ENCODE measurements at regions of chr10 and their contacts with region 1.

Region 1: DNA sequence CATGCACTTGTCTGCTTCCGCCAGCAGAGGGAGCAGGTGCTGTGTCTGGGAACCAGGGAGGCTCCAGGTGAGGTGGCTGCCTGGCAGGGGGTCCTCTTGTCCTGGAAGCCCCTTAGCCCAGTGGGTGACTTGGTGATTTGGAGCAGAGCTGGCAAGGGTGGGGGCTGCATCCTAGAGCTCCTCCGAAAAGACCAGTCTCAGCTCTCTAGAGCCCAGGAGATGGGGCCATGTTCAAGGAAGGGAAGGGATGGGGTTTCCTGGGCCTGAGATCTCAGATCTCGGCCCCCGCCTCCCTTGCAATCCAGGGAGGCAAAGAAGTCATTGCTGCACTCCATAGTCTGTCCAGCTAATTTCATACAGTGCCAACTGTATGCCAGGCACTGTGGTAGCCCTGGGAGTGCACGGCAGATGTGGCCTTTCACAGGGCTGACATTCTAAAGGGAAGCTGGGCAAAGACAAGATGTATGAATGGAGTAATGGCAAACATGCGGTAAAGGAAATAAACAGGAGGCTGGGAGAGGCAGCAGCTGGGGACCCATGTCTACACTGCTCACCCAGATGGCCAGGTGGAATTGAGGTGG is 20.4 kb upstream of the SFRP5 start:
- DNase-seq: peak; percentile 80
- H3K4me3 Mint-ChIP-seq: no peak overlapping the region
- H3K27ac Mint-ChIP-seq: peak overlapping the region; percentile 66
- H3K4me1 Mint-ChIP-seq: peaks cover 30% of the 10 kb centered on the region
- H3K27me3 Mint-ChIP-seq: peaks cover 3% of the 10 kb centered on the region

Region 2: DNA sequence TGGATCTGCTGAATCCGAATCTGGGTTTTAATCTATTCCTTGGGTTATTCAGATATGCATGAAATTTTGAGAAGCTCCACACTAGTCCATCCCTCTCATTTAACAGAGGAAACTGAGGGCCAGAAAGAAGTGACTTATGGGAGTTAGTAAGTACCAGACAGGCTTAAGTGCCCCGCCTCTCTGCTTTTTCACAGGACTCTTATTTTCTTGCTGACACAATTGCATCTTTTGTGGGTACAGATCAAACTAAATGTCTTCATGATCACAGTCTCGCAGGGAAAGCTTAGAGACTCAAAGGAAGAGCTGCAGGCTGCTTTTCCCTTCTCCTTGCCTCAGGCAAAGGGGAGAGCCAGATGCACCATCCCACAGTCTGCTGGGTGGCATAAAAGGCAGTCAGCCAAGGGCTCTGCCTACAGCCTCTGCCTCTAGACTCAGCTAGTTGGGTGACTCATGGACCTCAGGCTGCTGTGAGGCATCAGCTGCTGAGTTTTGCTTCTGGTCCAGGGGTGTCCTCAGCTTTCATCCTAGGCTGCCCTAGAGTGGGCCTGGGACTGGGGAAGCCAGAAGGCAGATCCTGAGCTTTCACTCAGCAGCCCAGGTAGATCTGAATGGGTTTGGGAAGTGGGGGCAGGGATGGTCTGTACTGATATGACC is 69.0 kb after region 1 on chr10:
- CTCF ChIA-PET with region 1: interaction called, 12 read pairs
- POLR2A ChIA-PET with region 1: no interaction called
- DNase-seq: no peak
- H3K4me3 Mint-ChIP-seq: no peak overlapping the region
- H3K27ac Mint-ChIP-seq: no peak overlapping the region
- H3K4me1 Mint-ChIP-seq: peaks cover 29% of the 10 kb centered on the region
- H3K27me3 Mint-ChIP-seq: no peaks in the 10 kb centered on the region

Region 3: GRCh38 chr10:97869091-97870042 is 77.1 kb after region 1 on chr10:
- CTCF ChIA-PET with region 1: interaction called, 16 read pairs
- POLR2A ChIA-PET with region 1: no interaction called
- DNase-seq: peak; percentile 94
- H3K4me3 Mint-ChIP-seq: no peak overlapping the region
- H3K27ac Mint-ChIP-seq: peak overlapping the region; percentile 71
- H3K4me1 Mint-ChIP-seq: peaks cover 14% of the 10 kb centered on the region
- H3K27me3 Mint-ChIP-seq: peaks cover 10% of the 10 kb centered on the region

Region 4: DNA sequence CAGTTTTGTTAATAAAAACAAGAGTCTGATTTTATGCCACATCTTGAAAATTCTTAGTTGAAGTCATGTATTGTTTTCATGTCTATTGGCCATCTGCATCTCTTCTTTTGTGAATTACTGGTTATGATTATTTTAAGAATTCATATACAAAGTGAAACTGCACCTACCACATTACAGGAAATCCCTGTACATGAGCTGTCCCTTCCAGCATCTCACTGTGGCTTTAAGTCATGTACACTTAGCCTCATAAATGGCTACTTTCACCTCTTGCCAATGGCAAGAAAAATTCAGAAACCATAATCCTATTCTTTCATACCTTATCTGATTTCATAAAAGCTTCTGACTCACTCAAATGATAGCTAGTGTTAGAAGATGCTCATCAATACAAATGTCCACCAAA is 189.6 kb after region 1 on chr10:
- CTCF ChIA-PET with region 1: no interaction called
- POLR2A ChIA-PET with region 1: no interaction called
- DNase-seq: no peak
- H3K4me3 Mint-ChIP-seq: no peak overlapping the region
- H3K27ac Mint-ChIP-seq: no peak overlapping the region
- H3K4me1 Mint-ChIP-seq: no peaks in the 10 kb centered on the region
- H3K27me3 Mint-ChIP-seq: peaks cover 29% of the 10 kb centered on the region

Measured in activated CD4-positive, alpha-beta T cell treated with anti-CD3 and anti-CD28 coated beads, Interleukin-2, amount 10 ng/mL, durations not matched to agents 7 days and 5 days (primary cell).